Activated CD8-positive, alpha-beta T cell treated with anti-CD3 and anti-CD28 coated beads for 36 hours (primary cell): ENCODE measurements at regions of chr1 and their contacts with region 1.

Region 1: DNA sequence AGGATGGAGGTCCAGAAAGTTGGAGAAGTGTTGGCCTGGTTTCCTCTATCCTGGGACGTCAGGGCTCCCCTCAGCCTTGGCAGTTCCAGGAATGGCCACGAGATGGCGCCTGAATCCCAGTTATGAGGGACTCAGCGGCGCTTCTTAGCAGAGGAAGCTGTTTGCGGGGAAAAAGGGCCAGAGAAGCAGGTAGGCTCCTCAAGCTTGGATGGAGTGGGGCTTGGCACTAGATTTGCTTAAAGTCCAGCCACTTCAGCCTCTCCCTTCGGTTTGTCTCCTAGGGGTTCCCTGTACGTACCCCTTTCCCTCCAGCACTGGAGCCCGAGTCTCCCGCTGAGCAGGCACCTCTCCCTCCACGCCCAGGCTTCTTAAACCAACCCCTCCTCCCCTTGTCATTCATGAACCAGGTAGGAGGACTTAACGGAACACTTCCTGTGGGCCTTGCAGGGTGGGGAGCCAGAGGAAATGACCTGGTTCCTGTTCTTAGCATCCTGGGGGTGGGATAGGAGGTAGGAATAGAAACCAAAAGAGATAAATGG is 32.0 kb upstream of the TENT5B start:
- DNase-seq: peak; percentile 94
- ATAC-seq: peak; percentile 96
- H3K4me3 Mint-ChIP-seq: peak overlapping the region; percentile 39
- H3K27ac Mint-ChIP-seq: no peak overlapping the region
- H3K4me1 Mint-ChIP-seq: peaks cover 15% of the 10 kb centered on the region
- H3K27me3 Mint-ChIP-seq: no peaks in the 10 kb centered on the region
- CTCF ChIP-seq: peak; percentile 92

Region 2: GRCh38 chr1:26546375-26546774 is 498.3 kb before region 1 on chr1:
- CTCF ChIA-PET with region 1: no interaction called
- POLR2A ChIA-PET with region 1: no interaction called
- intact Hi-C with region 1: no loop called
- DNase-seq: peak; percentile 34
- ATAC-seq: no peak
- H3K4me3 Mint-ChIP-seq: peak overlapping the region; percentile 92
- H3K27ac Mint-ChIP-seq: peak overlapping the region; percentile 85
- H3K4me1 Mint-ChIP-seq: peaks cover 62% of the 10 kb centered on the region
- H3K27me3 Mint-ChIP-seq: no peaks in the 10 kb centered on the region
- CTCF ChIP-seq: no peak

Region 3: GRCh38 chr1:26862781-26863676 is 181.7 kb before region 1 on chr1 and contains the start of gene SFN:
- CTCF ChIA-PET with region 1: no interaction called
- POLR2A ChIA-PET with region 1: no interaction called
- intact Hi-C with region 1: no loop called
- DNase-seq: peak; percentile 77
- ATAC-seq: peak; percentile 11
- H3K4me3 Mint-ChIP-seq: peak within 1 kb of the TSS; percentile 89
- H3K27ac Mint-ChIP-seq: peak within 1 kb of the TSS; percentile 87
- H3K4me1 Mint-ChIP-seq: peaks cover 20% of the 10 kb centered on the region
- H3K27me3 Mint-ChIP-seq: no peaks in the 10 kb centered on the region
- CTCF ChIP-seq: peak; percentile 64
- total RNA-seq, gene SFN: 0.47 to 0.59 TPM

Region 4: DNA sequence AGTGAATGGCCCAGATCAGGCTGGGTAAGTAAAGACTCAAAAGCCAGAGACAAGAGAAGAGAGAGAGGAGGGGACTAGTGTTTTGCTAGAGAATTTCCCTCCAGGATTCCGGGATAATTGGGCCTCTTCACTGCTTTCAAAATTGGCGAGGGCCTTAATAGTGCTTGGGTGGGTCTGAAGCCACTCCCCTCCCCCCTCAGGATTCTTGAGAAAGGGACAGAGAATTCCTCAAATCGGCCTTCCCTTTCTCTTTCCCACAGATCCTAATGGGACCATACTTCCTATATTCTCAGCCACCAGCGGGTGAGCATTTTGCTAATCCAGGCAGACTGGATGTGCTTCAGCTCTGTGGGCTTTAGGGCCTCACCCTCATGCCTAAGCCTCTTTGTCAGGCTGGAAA is 169.8 kb before region 1 on chr1:
- CTCF ChIA-PET with region 1: no interaction called
- POLR2A ChIA-PET with region 1: no interaction called
- intact Hi-C with region 1: no loop called
- DNase-seq: no peak
- ATAC-seq: no peak
- H3K4me3 Mint-ChIP-seq: no peak overlapping the region
- H3K27ac Mint-ChIP-seq: no peak overlapping the region
- H3K4me1 Mint-ChIP-seq: peaks cover 2% of the 10 kb centered on the region
- H3K27me3 Mint-ChIP-seq: no peaks in the 10 kb centered on the region
- CTCF ChIP-seq: no peak

Region 5: DNA sequence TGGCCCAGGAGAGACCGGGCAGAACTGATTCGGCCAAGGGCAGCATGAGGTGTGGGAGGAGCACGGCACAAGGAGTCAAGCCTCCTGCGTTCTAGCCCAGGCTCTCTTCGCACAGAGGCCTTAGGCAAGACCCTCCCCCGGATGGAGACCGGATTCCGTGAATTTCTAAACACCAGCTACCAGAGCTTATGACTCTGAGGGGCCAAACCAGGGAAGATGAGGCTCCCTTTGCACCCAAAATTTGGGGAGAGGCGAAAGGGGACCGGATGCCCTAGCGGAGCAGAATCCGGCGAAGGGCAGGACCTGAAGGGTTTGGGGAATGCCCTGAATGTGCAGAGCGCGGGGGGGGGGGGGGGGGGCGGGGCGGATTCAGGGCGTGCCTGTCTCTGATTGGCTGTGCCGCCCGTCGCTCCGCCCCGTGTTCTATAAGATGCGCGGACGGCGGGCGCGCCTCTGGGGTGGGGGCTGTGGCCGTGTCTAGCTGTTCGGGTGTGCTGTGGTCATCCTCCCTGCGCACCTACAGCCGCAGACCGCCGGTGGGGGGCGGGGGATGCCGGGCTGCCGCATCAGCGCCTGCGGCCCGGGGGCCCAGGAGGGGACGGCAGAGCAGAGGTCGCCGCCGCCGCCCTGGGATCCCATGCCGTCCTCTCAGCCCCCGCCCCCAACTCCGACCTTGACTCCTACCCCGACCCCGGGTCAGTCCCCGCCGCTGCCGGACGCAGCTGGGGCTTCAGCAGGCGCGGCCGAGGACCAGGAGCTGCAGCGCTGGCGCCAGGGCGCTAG is 51.3 kb before region 1 on chr1 and contains the start of gene TRNP1:
- CTCF ChIA-PET with region 1: interaction called, 72 read pairs
- POLR2A ChIA-PET with region 1: no interaction called
- intact Hi-C with region 1: no loop called
- DNase-seq: peak; percentile 79
- ATAC-seq: peak; percentile 68
- H3K4me3 Mint-ChIP-seq: peak within 1 kb of the TSS; percentile 74
- H3K27ac Mint-ChIP-seq: peak within 1 kb of the TSS; percentile 30
- H3K4me1 Mint-ChIP-seq: peaks cover 21% of the 10 kb centered on the region
- H3K27me3 Mint-ChIP-seq: peaks cover 49% of the 10 kb centered on the region
- CTCF ChIP-seq: no peak
- total RNA-seq, gene TRNP1: 0.16 to 0.38 TPM

Region 6: GRCh38 chr1:27031235-27032118 is 13.2 kb before region 1 on chr1:
- CTCF ChIA-PET with region 1: interaction called, 38 read pairs
- POLR2A ChIA-PET with region 1: no interaction called
- intact Hi-C with region 1: no loop called
- DNase-seq: no peak
- ATAC-seq: no peak
- H3K4me3 Mint-ChIP-seq: no peak overlapping the region
- H3K27ac Mint-ChIP-seq: no peak overlapping the region
- H3K4me1 Mint-ChIP-seq: peaks cover 4% of the 10 kb centered on the region
- H3K27me3 Mint-ChIP-seq: peaks cover 7% of the 10 kb centered on the region
- CTCF ChIP-seq: no peak

Region 7: DNA sequence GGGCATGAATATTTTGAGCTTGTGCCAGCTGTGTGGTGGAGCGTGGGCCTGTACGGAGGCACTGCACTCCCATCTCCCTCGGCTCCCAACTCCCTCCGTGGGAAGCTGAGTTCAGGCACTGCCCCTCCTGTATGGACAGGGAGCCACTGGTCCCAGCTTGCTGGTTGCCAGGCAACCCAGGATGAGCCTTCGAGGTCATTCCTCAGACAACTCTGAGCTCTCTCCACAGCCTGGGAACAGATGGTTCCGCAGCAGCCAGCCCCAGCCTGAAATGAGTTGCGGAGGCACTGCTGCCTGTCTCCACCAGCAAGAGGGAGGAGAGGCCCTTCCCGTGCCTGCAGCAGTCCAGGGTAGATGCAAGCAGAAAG is 26.4 kb after region 1 on chr1:
- CTCF ChIA-PET with region 1: interaction called, 27 read pairs
- POLR2A ChIA-PET with region 1: no interaction called
- intact Hi-C with region 1: no loop called
- DNase-seq: no peak
- ATAC-seq: no peak
- H3K4me3 Mint-ChIP-seq: no peak overlapping the region
- H3K27ac Mint-ChIP-seq: no peak overlapping the region
- H3K4me1 Mint-ChIP-seq: no peaks in the 10 kb centered on the region
- H3K27me3 Mint-ChIP-seq: no peaks in the 10 kb centered on the region
- CTCF ChIP-seq: no peak

Region 8: DNA sequence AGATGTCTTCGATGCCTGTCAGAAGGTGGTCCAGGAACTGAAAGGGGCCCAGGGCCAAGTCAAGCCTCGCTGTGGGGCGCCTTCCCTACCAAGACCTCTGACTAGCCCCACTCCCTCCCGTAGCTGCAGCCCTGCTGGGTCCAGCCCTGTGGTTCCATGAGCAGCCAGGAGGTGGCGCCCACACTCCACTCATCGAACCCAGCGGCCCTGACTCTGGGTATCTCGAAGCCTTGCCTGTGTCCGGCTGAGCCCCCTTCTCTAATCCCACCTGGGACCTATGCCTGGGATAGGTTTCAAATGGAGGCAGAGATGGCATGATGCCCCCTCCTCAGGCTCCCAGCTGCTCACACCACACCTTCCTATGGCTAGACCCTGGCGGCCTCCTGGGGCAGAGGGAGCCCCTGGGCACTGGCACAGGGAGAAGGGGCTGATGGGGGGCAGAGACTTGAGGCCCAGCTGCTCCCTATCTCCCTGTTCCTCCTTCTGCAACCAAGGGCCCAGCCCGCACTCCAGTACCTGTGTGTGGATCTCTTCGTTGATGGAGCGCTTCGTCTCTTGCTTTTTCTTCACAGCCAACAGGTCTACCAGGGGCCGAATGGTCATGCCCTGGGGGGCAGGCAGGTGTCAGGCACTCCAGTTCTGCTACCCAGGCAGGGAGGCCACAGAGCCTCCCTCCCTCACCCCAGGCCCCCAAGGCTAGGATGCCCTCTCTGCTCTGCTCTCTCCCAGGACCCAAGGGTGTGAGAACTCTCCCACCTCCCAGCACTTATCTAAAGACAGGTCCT is 58.2 kb after region 1 on chr1:
- CTCF ChIA-PET with region 1: interaction called, 307 read pairs
- POLR2A ChIA-PET with region 1: interaction called, 8 read pairs
- intact Hi-C with region 1: no loop called
- DNase-seq: peak; percentile 86
- ATAC-seq: peak; percentile 81
- H3K4me3 Mint-ChIP-seq: no peak overlapping the region
- H3K27ac Mint-ChIP-seq: no peak overlapping the region
- H3K4me1 Mint-ChIP-seq: peaks cover 23% of the 10 kb centered on the region
- H3K27me3 Mint-ChIP-seq: no peaks in the 10 kb centered on the region
- CTCF ChIP-seq: peak; percentile 93

Region 9: DNA sequence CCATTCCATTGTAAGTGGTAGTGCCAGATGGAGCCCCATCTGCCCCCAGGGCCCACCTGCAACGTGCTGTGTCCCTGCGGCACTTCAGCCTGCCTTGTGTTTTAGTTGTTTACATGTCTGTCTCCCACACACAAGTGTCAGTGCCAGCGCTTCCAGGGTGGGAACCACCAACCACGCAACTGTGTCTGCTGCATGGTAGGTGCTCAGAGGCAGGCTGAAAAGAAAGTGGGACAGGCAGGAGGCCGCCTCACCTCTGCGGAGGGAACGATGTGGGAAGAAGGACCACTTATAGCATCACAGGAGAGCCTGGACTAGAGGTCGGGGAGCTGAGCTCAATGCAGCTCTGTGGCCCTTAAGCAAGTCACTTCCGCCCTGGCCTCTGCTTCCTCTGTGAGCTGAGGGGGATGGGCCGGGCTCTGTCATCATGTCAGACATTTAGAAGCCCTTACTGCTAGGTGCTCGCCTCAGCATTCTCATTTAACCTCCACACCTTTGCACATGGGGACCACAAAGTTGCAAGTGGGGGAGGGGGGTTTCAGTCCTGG is 92.4 kb after region 1 on chr1:
- CTCF ChIA-PET with region 1: interaction called, 13 read pairs
- POLR2A ChIA-PET with region 1: no interaction called
- intact Hi-C with region 1: no loop called
- DNase-seq: peak; percentile 98
- ATAC-seq: peak; percentile 97
- H3K4me3 Mint-ChIP-seq: peak overlapping the region; percentile 70
- H3K27ac Mint-ChIP-seq: peak overlapping the region; percentile 97
- H3K4me1 Mint-ChIP-seq: peaks cover 54% of the 10 kb centered on the region
- H3K27me3 Mint-ChIP-seq: no peaks in the 10 kb centered on the region
- CTCF ChIP-seq: no peak

Region 10: DNA sequence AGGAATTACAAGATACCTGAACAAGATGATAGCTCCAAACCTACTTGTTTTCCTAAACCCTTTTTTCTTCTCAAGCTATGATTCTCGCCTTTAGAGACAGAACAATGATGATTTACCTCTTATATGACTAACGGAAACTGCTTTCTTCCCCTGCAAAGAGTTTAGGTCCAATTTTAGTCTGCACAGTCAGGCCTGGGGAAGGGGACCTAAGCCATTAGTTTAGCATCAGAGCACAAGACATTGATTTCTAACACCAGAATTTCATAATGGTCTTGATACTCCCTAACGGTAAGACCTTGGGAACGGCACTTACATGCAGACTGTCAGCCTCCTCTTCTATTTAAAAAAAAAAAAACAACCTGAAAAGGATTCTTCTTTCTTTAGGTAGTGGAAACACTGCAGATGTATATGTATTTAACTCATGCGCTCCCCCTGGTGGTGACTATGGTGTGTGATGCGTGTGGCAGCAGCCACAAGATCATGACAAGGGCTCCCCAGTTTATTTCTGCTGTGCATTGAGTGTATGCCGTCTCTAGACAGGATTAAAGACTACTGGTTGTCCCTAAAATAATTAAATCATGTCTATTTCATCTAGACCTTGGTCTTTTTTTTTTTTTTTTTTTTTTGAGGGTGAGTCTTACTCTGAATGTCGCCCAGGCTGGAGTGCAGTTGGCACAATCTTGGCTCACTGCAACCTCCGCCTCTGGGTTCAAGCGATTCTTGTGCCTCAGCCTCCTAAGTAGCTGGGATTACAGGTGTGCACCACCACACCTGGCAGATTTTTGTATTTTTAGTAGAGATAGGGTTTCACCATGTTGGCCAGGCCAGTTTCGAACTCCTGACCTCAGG is 240.0 kb after region 1 on chr1:
- CTCF ChIA-PET with region 1: interaction called, 9 read pairs
- POLR2A ChIA-PET with region 1: no interaction called
- intact Hi-C with region 1: loop called (anchors 10 kb)
- DNase-seq: peak; percentile 97
- ATAC-seq: peak; percentile 96
- H3K4me3 Mint-ChIP-seq: no peak overlapping the region
- H3K27ac Mint-ChIP-seq: no peak overlapping the region
- H3K4me1 Mint-ChIP-seq: no peaks in the 10 kb centered on the region
- H3K27me3 Mint-ChIP-seq: no peaks in the 10 kb centered on the region
- CTCF ChIP-seq: peak; percentile 88